HAP-1 (cell line): ENCODE measurements at regions of chr13 and their contacts with region 1.

Region 1: GRCh38 chr13:98677398-98677797 is 75.1 kb downstream of the SLC15A1 start:
- DNase-seq: peak; percentile 82 to 86
- H3K4me3 ChIP-seq: no peak overlapping the region
- H3K4me1 ChIP-seq: peaks cover 33% of the 10 kb centered on the region
- H3K27me3 ChIP-seq: no peaks in the 10 kb centered on the region

Region 2: GRCh38 chr13:98142380-98143156 is 534.8 kb before region 1 on chr13 and contains the start of gene FARP1:
- in situ Hi-C with region 1: loop called (anchors 25 kb)
- DNase-seq: peak; percentile 63 to 84
- H3K4me3 ChIP-seq: peak within 1 kb of the TSS; percentile 45
- H3K4me1 ChIP-seq: peaks cover 30% of the 10 kb centered on the region
- H3K27me3 ChIP-seq: no peaks in the 10 kb centered on the region; the same call in 1 of the 2 replicates

Region 3: GRCh38 chr13:98890186-98890585 is 212.8 kb after region 1 on chr13:
- in situ Hi-C with region 1: no loop called
- DNase-seq: no peak
- H3K4me3 ChIP-seq: no peak overlapping the region
- H3K4me1 ChIP-seq: peaks cover 12% of the 10 kb centered on the region
- H3K27me3 ChIP-seq: no peaks in the 10 kb centered on the region

Region 4: GRCh38 chr13:99033814-99034213 is 356.4 kb after region 1 on chr13:
- in situ Hi-C with region 1: loop called (anchors 25 kb)
- DNase-seq: peak in 1 of 2 experiments; percentile 69
- H3K4me3 ChIP-seq: no peak overlapping the region
- H3K4me1 ChIP-seq: peaks cover 12% of the 10 kb centered on the region
- H3K27me3 ChIP-seq: no peaks in the 10 kb centered on the region